Endothelial cell of umbilical vein (primary cell): ENCODE measurements at regions of chr12 and their contacts with region 1.

Region 1: GRCh38 chr12:96445691-96446583 is 43.4 kb upstream of the CFAP54 start:
- DNase-seq: peak; percentile 100
- H3K4me3 ChIP-seq: no peak overlapping the region
- H3K27ac ChIP-seq: peak overlapping the region; percentile 99
- H3K4me1 ChIP-seq: peaks cover 51% of the 10 kb centered on the region
- H3K27me3 ChIP-seq: no peaks in the 10 kb centered on the region
- CTCF ChIP-seq: no peak
- POLR2A ChIP-seq: peak; percentile 88

Region 2: GRCh38 chr12:96194971-96195844 is 250.7 kb before region 1 on chr12:
- CTCF ChIA-PET with region 1: no interaction called
- POLR2A ChIA-PET with region 1: no interaction called
- dilution Hi-C with region 1: no loop called
- intact Hi-C with region 1: loop called (anchors 5 kb)
- DNase-seq: peak; percentile 83
- H3K4me3 ChIP-seq: peak overlapping the region; percentile 65 to 90 (median 68)
- H3K27ac ChIP-seq: peak overlapping the region; percentile 100
- H3K4me1 ChIP-seq: peaks cover 40% of the 10 kb centered on the region
- H3K27me3 ChIP-seq: no peaks in the 10 kb centered on the region
- CTCF ChIP-seq: no peak
- POLR2A ChIP-seq: peak; percentile 68

Region 3: GRCh38 chr12:96399919-96400797 is 45.8 kb before region 1 on chr12 and contains the start of gene CDK17:
- CTCF ChIA-PET with region 1: interaction called, 61 read pairs
- POLR2A ChIA-PET with region 1: interaction called, 85 read pairs
- dilution Hi-C with region 1: no loop called
- intact Hi-C with region 1: loop called (anchors 1 kb)
- DNase-seq: peak; percentile 83
- H3K4me3 ChIP-seq: peak within 1 kb of the TSS; percentile 77 to 98 (median 80)
- H3K27ac ChIP-seq: peak within 1 kb of the TSS; percentile 99
- H3K4me1 ChIP-seq: peaks cover 42% of the 10 kb centered on the region
- H3K27me3 ChIP-seq: no peaks in the 10 kb centered on the region
- CTCF ChIP-seq: peak in 1 of 2 donors; percentile 42
- POLR2A ChIP-seq: peak; percentile 64
- total RNA-seq, gene CDK17: 176 and 193 TPM in 2 replicates

Region 4: DNA sequence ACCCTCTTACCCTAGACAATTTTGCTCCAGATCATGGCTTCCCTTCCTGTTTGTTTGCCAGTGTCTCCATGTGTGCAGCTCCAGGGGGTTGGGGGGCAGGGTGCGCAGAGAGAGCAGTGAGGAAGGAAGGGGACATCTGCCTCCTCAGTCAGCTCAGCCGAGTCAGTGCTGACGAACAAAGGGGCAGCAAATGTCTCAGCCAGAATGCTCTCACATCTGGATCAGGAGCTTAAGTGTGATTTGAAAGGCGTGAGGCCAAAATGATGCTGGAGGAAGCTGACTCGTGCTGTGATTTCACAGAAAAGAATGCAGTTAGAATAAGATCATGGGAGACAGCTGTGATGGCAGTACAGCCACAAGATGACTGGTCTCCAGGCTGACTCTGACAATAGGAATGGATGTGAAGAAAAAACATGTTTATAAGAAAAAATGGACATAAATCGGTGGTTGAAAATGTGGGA is 18.6 kb before region 1 on chr12:
- CTCF ChIA-PET with region 1: interaction called, 10 read pairs
- POLR2A ChIA-PET with region 1: interaction called, 55 read pairs
- dilution Hi-C with region 1: no loop called
- intact Hi-C with region 1: loop called (anchors 1 kb)
- DNase-seq: peak; percentile 99
- H3K4me3 ChIP-seq: peak overlapping the region in 2 of 3 experiments; percentile 3 to 47
- H3K27ac ChIP-seq: peak overlapping the region; percentile 99
- H3K4me1 ChIP-seq: peaks cover 56% of the 10 kb centered on the region
- H3K27me3 ChIP-seq: no peaks in the 10 kb centered on the region
- CTCF ChIP-seq: no peak
- POLR2A ChIP-seq: no peak

Region 5: GRCh38 chr12:96489103-96490056 is 43.4 kb after region 1 on chr12 and contains the start of gene CFAP54:
- CTCF ChIA-PET with region 1: interaction called, 7 read pairs
- POLR2A ChIA-PET with region 1: interaction called, 8 read pairs
- dilution Hi-C with region 1: no loop called
- intact Hi-C with region 1: loop called (anchors 1 kb)
- DNase-seq: peak; percentile 96
- H3K4me3 ChIP-seq: peak within 1 kb of the TSS; percentile 30 to 66 (median 53)
- H3K27ac ChIP-seq: peak within 1 kb of the TSS; percentile 88
- H3K4me1 ChIP-seq: peaks cover 57% of the 10 kb centered on the region
- H3K27me3 ChIP-seq: no peaks in the 10 kb centered on the region
- CTCF ChIP-seq: peak; percentile 92
- POLR2A ChIP-seq: no peak
- total RNA-seq, gene CFAP54: 21.5 and 26.9 TPM in 2 replicates

Region 6: DNA sequence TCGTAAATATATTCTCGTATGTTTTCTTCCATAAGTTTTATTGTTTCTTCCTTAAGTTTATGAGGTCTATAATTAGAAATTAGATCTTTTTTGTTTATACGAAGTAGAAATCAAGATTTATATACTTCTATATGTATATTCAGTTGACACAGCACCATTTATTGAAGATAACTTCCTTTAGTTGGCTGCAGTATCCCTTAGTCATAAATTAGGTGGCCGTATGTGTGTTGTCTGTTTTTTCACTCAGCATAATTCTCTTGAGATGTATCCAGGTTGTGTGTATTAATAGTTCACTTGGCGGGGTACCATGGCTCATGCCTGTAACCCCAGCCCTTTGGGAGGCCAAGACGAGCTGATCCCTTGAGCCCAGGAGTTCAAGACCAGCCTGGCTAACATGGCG is 84.0 kb after region 1 on chr12:
- CTCF ChIA-PET with region 1: no interaction called
- POLR2A ChIA-PET with region 1: no interaction called
- dilution Hi-C with region 1: no loop called
- intact Hi-C with region 1: no loop called
- DNase-seq: no peak
- H3K4me3 ChIP-seq: no peak overlapping the region
- H3K27ac ChIP-seq: no peak overlapping the region
- H3K4me1 ChIP-seq: peaks cover 11% of the 10 kb centered on the region
- H3K27me3 ChIP-seq: no peaks in the 10 kb centered on the region
- CTCF ChIP-seq: no peak
- POLR2A ChIP-seq: no peak

Region 7: GRCh38 chr12:97148941-97149559 is 703.1 kb after region 1 on chr12:
- CTCF ChIA-PET with region 1: no interaction called
- POLR2A ChIA-PET with region 1: no interaction called
- dilution Hi-C with region 1: no loop called
- intact Hi-C with region 1: loop called (anchors 10 kb)
- DNase-seq: peak; percentile 31
- H3K4me3 ChIP-seq: no peak overlapping the region
- H3K27ac ChIP-seq: no peak overlapping the region
- H3K4me1 ChIP-seq: peaks cover 20% of the 10 kb centered on the region
- H3K27me3 ChIP-seq: no peaks in the 10 kb centered on the region
- CTCF ChIP-seq: peak; percentile 65 to 75
- POLR2A ChIP-seq: no peak